ENCODE measurements at regions of chr3 and their contacts with region 1.

Region 1: DNA sequence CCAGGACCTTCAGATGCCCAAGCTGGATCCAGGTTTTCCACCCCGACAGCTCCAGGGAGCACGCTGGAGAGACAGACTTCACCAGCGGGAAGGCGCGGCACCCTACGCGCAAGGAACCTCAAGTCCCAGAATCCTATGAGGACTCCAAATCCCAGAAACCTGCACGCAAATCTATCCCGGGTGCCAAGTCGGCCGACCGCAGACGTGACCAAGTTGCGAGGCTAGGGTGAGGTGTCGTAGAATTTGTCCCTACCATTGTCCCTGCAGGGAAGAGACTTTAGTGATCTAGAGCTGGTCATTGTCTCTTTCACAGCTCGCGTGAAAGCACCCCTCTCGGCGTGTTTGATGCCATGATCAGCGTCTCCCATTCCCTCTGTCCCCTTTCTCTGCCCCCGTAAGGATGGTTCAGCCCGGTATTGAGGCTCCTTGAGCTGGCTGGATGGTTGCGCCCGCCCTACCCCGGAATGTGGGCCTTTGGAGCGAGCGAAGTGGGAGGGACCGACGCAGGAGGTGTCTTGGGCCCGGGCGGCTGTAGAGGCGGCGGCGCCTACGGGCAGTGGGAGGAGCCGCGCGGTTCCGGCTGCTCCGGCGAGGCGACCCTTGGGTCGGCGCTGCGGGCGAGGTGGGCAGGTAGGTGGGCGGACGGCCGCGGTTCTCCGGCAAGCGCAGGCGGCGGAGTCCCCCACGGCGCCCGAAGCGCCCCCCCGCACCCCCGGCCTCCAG is at the start of gene PRKCI:
- DNase-seq: peak; percentile 86 to 89 (median 88)
- H3K4me3 ChIP-seq: peak within 1 kb of the TSS; percentile 91 to 97
- H3K4me3 Mint-ChIP-seq: peak within 1 kb of the TSS; percentile 91 to 99 (median 94)
- H3K27ac ChIP-seq: peak within 1 kb of the TSS; percentile 72
- H3K27ac Mint-ChIP-seq: peak within 1 kb of the TSS; percentile 92 to 99 (median 95)
- H3K4me1 ChIP-seq: peaks cover 25% of the 10 kb centered on the region
- H3K4me1 Mint-ChIP-seq: peaks cover 24 to 39% (median 29%) of the 10 kb centered on the region in 4 donors
- H3K27me3 ChIP-seq: no peaks in the 10 kb centered on the region
- H3K27me3 Mint-ChIP-seq: no peaks in the 10 kb centered on the region
- total RNA-seq, gene PRKCI: 18.0 to 27.7 TPM

Region 2: GRCh38 chr3:170189398-170190256 is 32.5 kb before region 1 on chr3:
- CTCF ChIA-PET with region 1: interaction called, 3 read pairs
- POLR2A ChIA-PET with region 1: no interaction called
- intact Hi-C with region 1: loop called (anchors 2 kb)
- DNase-seq: no peak
- H3K4me3 ChIP-seq: no peak overlapping the region
- H3K4me3 Mint-ChIP-seq: peak overlapping the region in 3 of 8 donors; percentile 21 to 49 (median 22)
- H3K27ac ChIP-seq: no peak overlapping the region
- H3K27ac Mint-ChIP-seq: no peak overlapping the region
- H3K4me1 ChIP-seq: no peaks in the 10 kb centered on the region
- H3K4me1 Mint-ChIP-seq: peaks cover 8 to 11% (median 9%) of the 10 kb centered on the region in 4 donors
- H3K27me3 ChIP-seq: no peaks in the 10 kb centered on the region
- H3K27me3 Mint-ChIP-seq: peaks cover 0 to 1% of the 10 kb centered on the region in 2 donors

Region 3: DNA sequence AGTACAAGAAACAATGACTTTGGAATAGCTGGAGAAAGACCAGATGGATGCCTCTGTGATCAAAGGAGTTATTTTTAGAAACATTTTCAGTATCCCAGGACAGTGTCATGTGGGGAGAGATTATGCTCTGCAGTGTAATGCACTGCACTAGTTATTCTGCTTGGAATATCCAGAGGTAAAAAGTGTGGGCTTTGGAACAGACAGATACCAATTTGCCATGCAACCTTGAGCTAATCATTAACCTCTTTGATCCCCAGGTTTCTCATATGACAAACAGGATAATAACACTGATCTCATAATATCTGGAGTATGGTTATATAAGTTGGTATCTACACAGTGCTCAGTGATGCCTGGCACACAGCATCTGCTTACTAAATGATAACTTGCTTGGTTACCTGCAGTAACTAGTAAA is 376.0 kb after region 1 on chr3:
- CTCF ChIA-PET with region 1: no interaction called
- POLR2A ChIA-PET with region 1: no interaction called
- intact Hi-C with region 1: no loop called
- DNase-seq: no peak
- H3K4me3 ChIP-seq: no peak overlapping the region
- H3K4me3 Mint-ChIP-seq: no peak overlapping the region
- H3K27ac ChIP-seq: no peak overlapping the region
- H3K27ac Mint-ChIP-seq: no peak overlapping the region
- H3K4me1 ChIP-seq: no peaks in the 10 kb centered on the region
- H3K4me1 Mint-ChIP-seq: no peaks in the 10 kb centered on the region
- H3K27me3 ChIP-seq: no peaks in the 10 kb centered on the region
- H3K27me3 Mint-ChIP-seq: peaks cover 12 to 14% of the 10 kb centered on the region in 2 donors

Measured in CD4-positive, alpha-beta memory T cell (primary cell).